Left lung (tissue), 14 donors: ENCODE measurements at regions of chr7 and their contacts with region 1.

Region 1: DNA sequence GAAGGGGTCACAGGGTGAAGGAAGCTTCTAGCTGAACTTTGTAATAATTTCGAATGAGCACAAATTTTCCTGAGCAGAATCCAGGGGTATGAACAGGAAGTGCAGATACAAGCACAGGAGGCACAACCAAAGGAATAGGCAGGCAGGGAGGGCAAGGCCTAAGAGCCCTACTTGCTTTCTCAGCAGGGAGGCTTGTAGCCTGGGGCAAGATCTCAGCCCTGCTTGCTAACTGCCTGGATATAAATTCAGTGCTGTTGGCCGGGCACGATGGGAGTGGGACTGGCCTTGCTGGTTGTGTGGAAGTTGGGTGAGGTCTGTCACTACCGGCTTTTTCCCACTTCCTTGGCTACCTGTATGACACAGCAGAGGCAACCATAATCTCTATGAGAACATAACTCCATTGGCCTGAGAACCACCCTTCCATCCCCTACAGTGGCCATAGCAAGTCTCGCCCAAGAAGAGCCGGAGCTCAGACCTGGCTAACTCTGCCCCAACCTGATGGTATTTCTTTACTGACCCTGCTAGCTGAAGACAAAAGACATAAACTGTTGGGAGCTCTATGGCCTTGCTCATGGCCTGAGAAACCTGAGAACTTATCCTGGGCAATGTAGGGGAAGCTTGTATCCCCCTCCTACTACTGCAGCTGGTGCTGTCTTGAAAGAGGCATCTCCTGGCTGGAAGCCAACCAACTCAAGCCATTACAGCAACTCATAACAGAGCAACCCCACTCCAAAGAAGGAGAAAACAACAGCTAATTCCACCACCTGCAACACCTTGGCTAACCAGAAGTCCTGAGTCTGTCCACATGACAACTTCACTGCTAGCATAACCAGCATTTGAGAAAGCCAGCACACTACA is 27.6 kb downstream of the CLDN12 start:
- DNase-seq: no peak
- ATAC-seq: no peak
- H3K4me3 ChIP-seq: no peak overlapping the region
- H3K27ac ChIP-seq: no peak overlapping the region
- H3K4me1 ChIP-seq: no peaks in the 10 kb centered on the region
- H3K27me3 ChIP-seq: no peaks in the 10 kb centered on the region
- CTCF ChIP-seq: no peak

Region 2: GRCh38 chr7:90165724-90166123 is 265.1 kb before region 1 on chr7:
- intact Hi-C with region 1: loop called in 1 of 2 experiments (anchors 10 kb)
- DNase-seq: peak in 1 of 4 donors; percentile 13
- ATAC-seq: no peak
- H3K4me3 ChIP-seq: no peak overlapping the region
- H3K27ac ChIP-seq: no peak overlapping the region
- H3K4me1 ChIP-seq: no peaks in the 10 kb centered on the region
- H3K27me3 ChIP-seq: no peaks in the 10 kb centered on the region
- CTCF ChIP-seq: no peak

Region 3: DNA sequence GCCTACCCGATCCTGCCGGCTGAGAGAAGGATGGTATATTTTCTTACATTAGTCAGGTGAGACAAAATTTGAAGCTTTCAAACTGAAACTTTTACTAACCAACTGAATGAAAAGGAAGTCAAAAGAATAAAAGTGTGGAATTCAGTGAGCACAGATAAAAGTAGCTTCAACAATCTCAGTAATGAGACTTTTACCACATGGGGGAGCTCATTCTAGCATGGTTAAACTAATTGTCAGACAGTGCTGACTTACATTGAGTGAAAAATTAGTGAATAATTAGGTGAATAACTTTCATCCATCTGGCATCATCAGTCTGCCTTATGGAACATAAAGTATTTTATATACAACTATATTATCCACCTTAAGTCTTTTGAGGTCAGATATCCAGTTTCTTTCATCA is 118.1 kb before region 1 on chr7:
- intact Hi-C with region 1: no loop called
- DNase-seq: no peak
- ATAC-seq: no peak
- H3K4me3 ChIP-seq: no peak overlapping the region
- H3K27ac ChIP-seq: no peak overlapping the region
- H3K4me1 ChIP-seq: no peaks in the 10 kb centered on the region
- H3K27me3 ChIP-seq: peaks cover 0 to 7% of the 10 kb centered on the region in 2 donors
- CTCF ChIP-seq: no peak